ENCODE measurements at regions of chr7 and their contacts with region 1.

Region 1: DNA sequence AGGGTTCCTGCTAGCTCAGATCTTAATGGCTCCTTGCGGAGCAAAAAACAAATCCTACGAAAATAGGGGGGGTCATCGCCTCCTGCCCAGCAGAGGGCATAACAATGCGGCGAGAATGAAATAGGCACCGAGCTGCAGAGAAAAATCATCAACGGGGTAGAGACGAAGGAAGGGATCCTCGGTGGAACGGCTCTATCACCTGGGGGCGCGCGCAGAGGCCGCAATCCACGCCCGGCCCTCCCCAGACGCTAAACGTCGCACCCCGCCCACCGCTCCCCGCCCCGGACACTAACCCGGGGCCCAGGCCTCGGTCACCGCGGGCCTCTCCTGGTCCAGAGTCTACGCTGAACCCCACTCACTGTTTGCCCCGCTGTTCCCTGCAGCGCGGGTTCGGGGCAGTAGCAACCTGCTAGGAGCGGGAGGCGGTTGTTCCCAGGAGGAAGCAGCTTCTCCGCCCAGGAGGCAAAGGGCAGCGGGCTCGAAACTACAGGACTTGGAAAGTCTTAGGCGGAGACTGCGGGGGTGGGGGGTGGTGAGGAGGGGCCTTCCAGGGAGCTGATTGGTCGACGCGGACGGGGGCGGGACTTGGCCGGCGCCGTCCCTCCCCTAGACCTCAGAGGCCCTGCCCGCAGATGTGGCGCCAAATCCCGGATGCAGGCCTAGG is at the start of gene TCAF1:
- DNase-seq: peak; percentile 88
- ATAC-seq: peak; percentile 91
- H3K4me3 ChIP-seq: peak within 1 kb of the TSS; percentile 89
- H3K27ac ChIP-seq: peak within 1 kb of the TSS; percentile 84
- H3K4me1 ChIP-seq: peaks cover 24% of the 10 kb centered on the region
- H3K27me3 ChIP-seq: no peaks in the 10 kb centered on the region
- CTCF ChIP-seq: peak; percentile 61
- total RNA-seq, gene TCAF1: 12.4 and 16.9 TPM in 2 replicates

Region 2: GRCh38 chr7:142811154-142811737 is 1090.6 kb before region 1 on chr7:
- CTCF ChIA-PET with region 1: no interaction called
- POLR2A ChIA-PET with region 1: no interaction called
- intact Hi-C with region 1: no loop called
- DNase-seq: peak; percentile 74
- ATAC-seq: no peak
- H3K4me3 ChIP-seq: no peak overlapping the region
- H3K27ac ChIP-seq: peak overlapping the region; percentile 98
- H3K4me1 ChIP-seq: peaks cover 79% of the 10 kb centered on the region
- H3K27me3 ChIP-seq: no peaks in the 10 kb centered on the region
- CTCF ChIP-seq: peak; percentile 84

Region 3: GRCh38 chr7:144011458-144012230 is 109.8 kb after region 1 on chr7:
- CTCF ChIA-PET with region 1: interaction called, 35 read pairs
- POLR2A ChIA-PET with region 1: no interaction called
- intact Hi-C with region 1: loop called (anchors 1 kb)
- DNase-seq: peak; percentile 55
- ATAC-seq: peak; percentile 95
- H3K4me3 ChIP-seq: no peak overlapping the region
- H3K27ac ChIP-seq: no peak overlapping the region
- H3K4me1 ChIP-seq: no peaks in the 10 kb centered on the region
- H3K27me3 ChIP-seq: no peaks in the 10 kb centered on the region
- CTCF ChIP-seq: peak; percentile 67

Region 4: DNA sequence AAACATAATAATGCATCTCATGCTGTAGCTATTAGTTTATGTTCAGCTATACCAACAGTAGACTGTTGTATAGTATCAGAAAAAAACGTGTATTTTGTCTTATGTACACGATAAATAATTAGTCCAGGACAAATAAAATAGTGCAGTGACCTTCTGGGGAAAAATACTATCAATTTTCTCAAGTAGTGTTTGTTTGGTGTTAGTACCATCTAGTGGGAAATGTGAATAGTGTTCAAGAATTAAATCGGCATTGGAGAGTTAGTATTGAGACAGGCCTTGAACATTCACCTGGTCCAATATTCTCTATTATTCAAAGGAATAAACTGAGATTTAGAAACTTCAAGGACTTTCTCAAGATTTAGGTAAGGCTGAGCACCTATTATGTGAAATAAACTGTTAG is 125.3 kb after region 1 on chr7:
- CTCF ChIA-PET with region 1: interaction called, 6 read pairs
- POLR2A ChIA-PET with region 1: no interaction called
- intact Hi-C with region 1: loop called (anchors 1 kb)
- DNase-seq: peak; percentile 52
- ATAC-seq: peak; percentile 68
- H3K4me3 ChIP-seq: no peak overlapping the region
- H3K27ac ChIP-seq: no peak overlapping the region
- H3K4me1 ChIP-seq: peaks cover 7% of the 10 kb centered on the region; the same call in 1 of the 2 replicates
- H3K27me3 ChIP-seq: no peaks in the 10 kb centered on the region
- CTCF ChIP-seq: peak; percentile 66